Colonic mucosa (tissue), 4 donors: ENCODE measurements at regions of chr7 and their contacts with region 1.

Region 1: GRCh38 chr7:65006094-65006992 is at the start of gene ERV3-1:
- DNase-seq: peak; percentile 96
- H3K4me3 ChIP-seq: peak within 1 kb of the TSS; percentile 61
- H3K27ac ChIP-seq: peak within 1 kb of the TSS; percentile 59
- H3K4me1 ChIP-seq: no peaks in the 10 kb centered on the region
- H3K27me3 ChIP-seq: no peaks in the 10 kb centered on the region
- CTCF ChIP-seq: no peak
- total RNA-seq, gene ERV3-1: 5.5 to 7.7 TPM

Region 2: GRCh38 chr7:63900394-63901203 is 1105.7 kb before region 1 on chr7:
- intact Hi-C with region 1: loop called (anchors 10 kb)
- DNase-seq: peak; percentile 95
- H3K4me3 ChIP-seq: peak overlapping the region; percentile 51
- H3K27ac ChIP-seq: no peak overlapping the region
- H3K4me1 ChIP-seq: no peaks in the 10 kb centered on the region
- H3K27me3 ChIP-seq: no peaks in the 10 kb centered on the region
- CTCF ChIP-seq: no peak

Region 3: GRCh38 chr7:64830926-64831325 is 175.4 kb before region 1 on chr7:
- intact Hi-C with region 1: no loop called
- DNase-seq: no peak
- H3K4me3 ChIP-seq: no peak overlapping the region
- H3K27ac ChIP-seq: no peak overlapping the region
- H3K4me1 ChIP-seq: no peaks in the 10 kb centered on the region
- H3K27me3 ChIP-seq: no peaks in the 10 kb centered on the region
- CTCF ChIP-seq: no peak

Region 4: GRCh38 chr7:64902806-64903721 is 103.3 kb before region 1 on chr7 and contains the start of gene ZNF273:
- intact Hi-C with region 1: loop called (anchors 10 kb)
- DNase-seq: peak; percentile 97
- H3K4me3 ChIP-seq: peak within 1 kb of the TSS; percentile 82
- H3K27ac ChIP-seq: peak within 1 kb of the TSS; percentile 35
- H3K4me1 ChIP-seq: no peaks in the 10 kb centered on the region
- H3K27me3 ChIP-seq: no peaks in the 10 kb centered on the region
- CTCF ChIP-seq: no peak
- total RNA-seq, gene ZNF273: 5.0 to 7.1 TPM